Activated CD8-positive, alpha-beta T cell treated with anti-CD3 and anti-CD28 coated beads, Interleukin-2, amount 10 ng/mL, durations not matched to agents 7 days and 5 days (primary cell): ENCODE measurements at regions of chr15 and their contacts with region 1.

Region 1: GRCh38 chr15:31488426-31489204 is 162.0 kb downstream of the KLF13 start:
- DNase-seq: peak; percentile 59
- ATAC-seq: peak; percentile 58
- H3K4me3 Mint-ChIP-seq: no peak overlapping the region
- H3K27ac Mint-ChIP-seq: peak overlapping the region; percentile 72
- H3K4me1 Mint-ChIP-seq: peaks cover 59% of the 10 kb centered on the region
- H3K27me3 Mint-ChIP-seq: no peaks in the 10 kb centered on the region

Region 2: GRCh38 chr15:31200735-31201151 is 287.9 kb before region 1 on chr15:
- CTCF ChIA-PET with region 1: interaction called, 41 read pairs
- POLR2A ChIA-PET with region 1: no interaction called
- DNase-seq: peak; percentile 80
- ATAC-seq: peak; percentile 86
- H3K4me3 Mint-ChIP-seq: no peak overlapping the region
- H3K27ac Mint-ChIP-seq: peak overlapping the region; percentile 32
- H3K4me1 Mint-ChIP-seq: peaks cover 19% of the 10 kb centered on the region
- H3K27me3 Mint-ChIP-seq: peaks cover 14% of the 10 kb centered on the region

Region 3: GRCh38 chr15:31265871-31266711 is 222.5 kb before region 1 on chr15:
- CTCF ChIA-PET with region 1: interaction called, 14 read pairs
- POLR2A ChIA-PET with region 1: no interaction called
- DNase-seq: peak; percentile 87
- ATAC-seq: peak; percentile 77
- H3K4me3 Mint-ChIP-seq: peak overlapping the region; percentile 61
- H3K27ac Mint-ChIP-seq: peak overlapping the region; percentile 95
- H3K4me1 Mint-ChIP-seq: peaks cover 95% of the 10 kb centered on the region
- H3K27me3 Mint-ChIP-seq: no peaks in the 10 kb centered on the region

Region 4: GRCh38 chr15:31352911-31353811 is 135.5 kb before region 1 on chr15:
- CTCF ChIA-PET with region 1: interaction called, 12 read pairs
- POLR2A ChIA-PET with region 1: interaction called, 3 read pairs
- DNase-seq: peak; percentile 62
- ATAC-seq: peak; percentile 41
- H3K4me3 Mint-ChIP-seq: peak overlapping the region; percentile 70
- H3K27ac Mint-ChIP-seq: peak overlapping the region; percentile 97
- H3K4me1 Mint-ChIP-seq: peaks cover 98% of the 10 kb centered on the region
- H3K27me3 Mint-ChIP-seq: no peaks in the 10 kb centered on the region

Region 5: GRCh38 chr15:31379042-31379441 is 109.6 kb before region 1 on chr15:
- CTCF ChIA-PET with region 1: interaction called, 11 read pairs
- POLR2A ChIA-PET with region 1: interaction called, 3 read pairs
- DNase-seq: no peak
- ATAC-seq: no peak
- H3K4me3 Mint-ChIP-seq: no peak overlapping the region
- H3K27ac Mint-ChIP-seq: peak overlapping the region; percentile 72
- H3K4me1 Mint-ChIP-seq: peaks cover 67% of the 10 kb centered on the region
- H3K27me3 Mint-ChIP-seq: no peaks in the 10 kb centered on the region

Region 6: DNA sequence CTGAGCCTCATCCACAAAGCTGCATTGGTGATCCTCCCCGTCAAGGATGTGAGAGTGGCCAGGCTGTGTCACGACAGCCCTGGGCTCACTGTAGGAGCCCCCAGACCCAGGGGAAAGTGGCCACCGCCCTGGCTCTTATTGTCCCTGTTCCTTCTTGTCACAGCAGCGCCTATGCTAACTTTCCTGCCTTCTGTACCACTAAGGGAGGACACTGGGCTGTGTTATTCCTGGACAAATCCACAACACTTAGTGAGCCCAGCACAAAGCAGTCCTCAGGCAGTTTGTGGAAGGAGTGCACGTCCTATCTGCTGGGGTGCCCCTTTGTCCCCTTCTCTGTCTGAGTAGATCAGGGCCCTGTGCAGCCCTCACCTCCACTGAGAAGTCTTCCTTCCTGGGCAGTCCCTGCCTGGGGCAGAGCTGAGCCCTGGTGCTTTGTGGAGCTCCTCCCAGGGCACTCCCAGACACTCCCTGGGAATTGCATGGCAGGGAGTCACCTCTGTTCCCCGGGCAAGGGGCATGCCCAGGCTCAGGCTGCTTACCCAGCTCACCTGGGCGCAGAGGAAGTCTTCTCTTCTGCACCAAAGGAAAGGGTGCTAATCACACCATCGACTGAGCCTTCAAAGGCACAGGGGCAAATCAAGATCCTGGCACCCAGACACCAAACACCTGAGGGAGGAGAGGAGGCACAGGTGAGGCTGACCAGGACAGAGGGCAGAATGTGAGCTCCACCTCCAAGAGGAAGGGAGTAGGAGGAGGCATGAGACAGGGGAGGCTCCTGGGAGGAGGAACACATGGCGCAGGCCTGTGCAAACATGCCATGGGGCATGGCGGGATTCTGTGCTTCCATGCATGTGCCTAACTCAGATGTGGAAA is 23.3 kb before region 1 on chr15:
- CTCF ChIA-PET with region 1: interaction called, 12 read pairs
- POLR2A ChIA-PET with region 1: interaction called, 4 read pairs
- DNase-seq: no peak
- ATAC-seq: no peak
- H3K4me3 Mint-ChIP-seq: no peak overlapping the region
- H3K27ac Mint-ChIP-seq: no peak overlapping the region
- H3K4me1 Mint-ChIP-seq: no peaks in the 10 kb centered on the region
- H3K27me3 Mint-ChIP-seq: no peaks in the 10 kb centered on the region

Region 7: DNA sequence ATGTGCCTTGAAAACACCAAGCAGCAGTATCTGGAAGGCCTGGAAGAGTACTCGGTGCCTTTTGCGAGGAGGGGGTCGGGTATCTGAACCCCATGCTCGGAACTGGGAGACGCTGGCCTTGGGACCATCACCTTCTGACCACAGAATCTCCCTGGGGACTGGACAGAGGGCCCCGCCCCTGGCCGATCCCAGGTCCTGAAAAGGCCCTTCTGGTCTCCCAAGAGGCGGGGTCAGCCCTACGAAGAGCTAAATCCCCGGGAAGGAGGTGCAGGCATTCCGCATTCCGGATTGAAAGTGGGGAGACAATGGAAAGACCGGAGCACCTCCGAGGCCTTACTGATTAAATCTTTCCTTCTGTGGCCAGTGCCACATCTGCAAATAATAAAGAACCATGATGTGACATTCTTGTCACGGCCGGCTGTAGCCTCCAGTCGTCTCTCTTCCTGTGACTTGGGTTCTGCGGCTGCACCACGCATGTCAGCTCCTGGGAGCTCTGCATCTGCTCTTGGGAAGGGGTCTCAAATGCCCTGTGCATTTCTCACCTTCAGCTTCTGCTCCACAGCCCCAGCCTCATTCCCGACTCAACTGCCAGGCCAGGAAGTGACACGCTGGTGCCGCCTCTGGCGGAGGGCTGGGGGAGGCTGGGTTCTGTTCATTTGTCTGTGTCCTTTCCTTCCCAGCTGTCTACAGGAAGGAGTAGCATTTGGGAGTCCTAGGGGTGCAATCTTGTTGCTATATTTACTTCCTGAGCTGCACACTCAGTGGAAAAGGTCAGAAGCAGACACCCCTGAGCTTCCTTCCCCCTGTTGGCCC is 11.5 kb after region 1 on chr15:
- CTCF ChIA-PET with region 1: interaction called, 29 read pairs
- POLR2A ChIA-PET with region 1: no interaction called
- DNase-seq: peak; percentile 15
- ATAC-seq: no peak
- H3K4me3 Mint-ChIP-seq: no peak overlapping the region
- H3K27ac Mint-ChIP-seq: no peak overlapping the region
- H3K4me1 Mint-ChIP-seq: peaks cover 3% of the 10 kb centered on the region
- H3K27me3 Mint-ChIP-seq: peaks cover 8% of the 10 kb centered on the region

Region 8: GRCh38 chr15:31513178-31513577 is 24.6 kb after region 1 on chr15:
- CTCF ChIA-PET with region 1: no interaction called
- POLR2A ChIA-PET with region 1: no interaction called
- DNase-seq: peak; percentile 16
- ATAC-seq: no peak
- H3K4me3 Mint-ChIP-seq: no peak overlapping the region
- H3K27ac Mint-ChIP-seq: no peak overlapping the region
- H3K4me1 Mint-ChIP-seq: peaks cover 10% of the 10 kb centered on the region
- H3K27me3 Mint-ChIP-seq: peaks cover 6% of the 10 kb centered on the region

Region 9: DNA sequence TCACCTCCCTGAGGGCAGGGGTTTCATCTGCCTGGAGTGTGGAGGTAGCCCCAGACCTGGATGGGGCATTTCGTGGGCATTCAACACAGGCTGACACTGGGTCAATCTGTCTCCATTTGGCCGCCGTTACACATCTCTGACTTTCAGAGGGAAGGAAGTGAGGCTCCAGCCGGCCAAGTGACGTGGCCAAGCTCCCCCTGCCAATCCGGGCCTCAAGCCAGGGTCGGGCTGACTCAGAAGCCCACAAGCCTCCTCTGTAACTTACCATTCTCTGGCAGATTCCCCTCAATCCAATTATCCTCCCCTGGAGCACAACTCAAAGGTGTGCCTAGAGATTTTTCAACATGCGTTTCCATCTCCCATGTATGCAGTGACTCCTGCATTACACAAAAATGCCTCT is 65.6 kb after region 1 on chr15:
- CTCF ChIA-PET with region 1: no interaction called
- POLR2A ChIA-PET with region 1: no interaction called
- DNase-seq: no peak
- ATAC-seq: no peak
- H3K4me3 Mint-ChIP-seq: no peak overlapping the region
- H3K27ac Mint-ChIP-seq: no peak overlapping the region
- H3K4me1 Mint-ChIP-seq: peaks cover 2% of the 10 kb centered on the region
- H3K27me3 Mint-ChIP-seq: no peaks in the 10 kb centered on the region